Gastrocnemius medialis (tissue), 4 donors: ENCODE measurements at regions of chr3 and their contacts with region 1.

Region 1: GRCh38 chr3:16290007-16290826 is 25.2 kb downstream of the OXNAD1 start:
- DNase-seq: peak in 1 of 2 donors; percentile 26
- ATAC-seq: no peak
- H3K4me3 ChIP-seq: no peak overlapping the region
- H3K27ac ChIP-seq: peak overlapping the region in 3 of 4 donors; percentile 75 to 83 (median 76)
- H3K4me1 ChIP-seq: peaks cover 50 to 57% of the 10 kb centered on the region in 2 donors
- H3K27me3 ChIP-seq: no peaks in the 10 kb centered on the region
- CTCF ChIP-seq: peak; percentile 60 to 83 (median 79)
- POLR2A ChIP-seq: no peak

Region 2: DNA sequence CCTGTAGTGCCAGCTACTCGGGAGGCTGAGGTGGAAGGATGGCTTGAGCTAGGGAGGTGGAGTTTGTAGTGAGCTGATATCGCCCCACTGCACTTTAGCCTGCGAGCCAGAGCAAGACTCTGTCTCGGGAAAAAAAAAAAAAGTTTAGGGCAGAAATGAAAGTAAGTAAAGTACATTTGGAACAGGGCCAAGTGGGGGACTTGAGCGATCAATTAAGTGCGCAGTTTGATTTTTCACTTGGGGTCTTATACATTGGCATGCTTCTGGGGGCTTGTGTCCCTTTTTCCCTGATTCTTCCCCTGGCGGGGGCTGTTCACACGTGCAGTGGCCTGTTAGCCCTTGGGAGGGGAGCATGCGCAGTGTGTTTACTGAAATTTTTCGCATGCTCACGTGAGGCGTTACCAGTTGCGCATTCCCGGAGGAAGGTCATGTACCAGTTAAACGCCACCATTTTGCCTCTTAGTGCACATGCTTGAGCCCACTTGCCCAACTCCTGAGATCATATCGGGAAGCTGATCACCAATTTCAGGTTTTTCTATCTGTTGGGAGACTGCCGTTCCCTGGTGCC is 73.8 kb before region 1 on chr3:
- in situ Hi-C with region 1: no loop called
- intact Hi-C with region 1: no loop called
- DNase-seq: no peak
- ATAC-seq: no peak
- H3K4me3 ChIP-seq: no peak overlapping the region
- H3K27ac ChIP-seq: no peak overlapping the region
- H3K4me1 ChIP-seq: no peaks in the 10 kb centered on the region
- H3K27me3 ChIP-seq: no peaks in the 10 kb centered on the region
- CTCF ChIP-seq: no peak
- POLR2A ChIP-seq: no peak

Region 3: GRCh38 chr3:16704941-16705340 is 414.7 kb after region 1 on chr3:
- in situ Hi-C with region 1: no loop called
- intact Hi-C with region 1: no loop called
- DNase-seq: no peak
- ATAC-seq: no peak
- H3K4me3 ChIP-seq: no peak overlapping the region
- H3K27ac ChIP-seq: no peak overlapping the region
- H3K4me1 ChIP-seq: no peaks in the 10 kb centered on the region
- H3K27me3 ChIP-seq: no peaks in the 10 kb centered on the region
- CTCF ChIP-seq: no peak
- POLR2A ChIP-seq: no peak

Region 4: DNA sequence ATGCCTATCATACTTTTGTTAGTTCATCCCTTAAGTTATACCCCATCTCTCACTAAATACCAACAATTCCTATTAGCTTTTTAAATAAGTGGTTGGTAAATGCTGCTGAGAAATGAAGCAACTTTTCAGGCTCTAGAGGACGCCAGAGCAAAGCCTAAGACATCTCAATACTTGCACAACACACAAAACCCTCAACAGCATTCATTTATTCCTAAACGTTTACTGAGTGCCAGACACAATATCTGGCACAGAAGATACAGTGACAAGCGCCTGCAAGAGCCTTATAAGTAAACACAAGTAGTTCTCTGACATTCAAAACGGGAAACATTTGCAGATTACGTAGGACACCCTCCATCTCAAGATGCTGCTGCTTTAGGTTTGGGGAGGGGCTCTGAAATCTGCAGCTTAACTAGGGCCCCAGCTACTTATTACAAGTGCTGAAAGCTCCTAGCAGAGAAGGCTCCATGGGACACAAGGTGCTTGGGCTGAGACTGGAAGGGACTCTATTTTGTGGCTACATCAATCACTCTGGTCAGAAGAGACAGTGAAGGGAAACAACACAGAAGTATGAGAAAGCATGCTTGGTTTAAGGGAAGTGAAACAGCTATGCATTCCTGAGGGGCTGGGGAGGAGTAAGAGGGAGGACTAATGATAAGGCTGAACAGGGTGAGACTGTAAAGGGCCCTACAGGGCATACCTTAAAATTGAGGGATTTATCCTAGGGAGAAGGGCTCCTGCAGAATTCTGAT is 905.8 kb after region 1 on chr3:
- in situ Hi-C with region 1: loop called in 1 of 4 experiments (anchors 25 kb)
- intact Hi-C with region 1: no loop called
- DNase-seq: no peak
- ATAC-seq: no peak
- H3K4me3 ChIP-seq: no peak overlapping the region
- H3K27ac ChIP-seq: peak overlapping the region in 2 of 4 donors; percentile 8 to 32
- H3K4me1 ChIP-seq: peaks cover 20 to 29% of the 10 kb centered on the region in 2 donors
- H3K27me3 ChIP-seq: no peaks in the 10 kb centered on the region
- CTCF ChIP-seq: no peak
- POLR2A ChIP-seq: no peak